Adrenal gland (tissue), 19 donors: ENCODE measurements at regions of chr20 and their contacts with region 1.

Region 1: DNA sequence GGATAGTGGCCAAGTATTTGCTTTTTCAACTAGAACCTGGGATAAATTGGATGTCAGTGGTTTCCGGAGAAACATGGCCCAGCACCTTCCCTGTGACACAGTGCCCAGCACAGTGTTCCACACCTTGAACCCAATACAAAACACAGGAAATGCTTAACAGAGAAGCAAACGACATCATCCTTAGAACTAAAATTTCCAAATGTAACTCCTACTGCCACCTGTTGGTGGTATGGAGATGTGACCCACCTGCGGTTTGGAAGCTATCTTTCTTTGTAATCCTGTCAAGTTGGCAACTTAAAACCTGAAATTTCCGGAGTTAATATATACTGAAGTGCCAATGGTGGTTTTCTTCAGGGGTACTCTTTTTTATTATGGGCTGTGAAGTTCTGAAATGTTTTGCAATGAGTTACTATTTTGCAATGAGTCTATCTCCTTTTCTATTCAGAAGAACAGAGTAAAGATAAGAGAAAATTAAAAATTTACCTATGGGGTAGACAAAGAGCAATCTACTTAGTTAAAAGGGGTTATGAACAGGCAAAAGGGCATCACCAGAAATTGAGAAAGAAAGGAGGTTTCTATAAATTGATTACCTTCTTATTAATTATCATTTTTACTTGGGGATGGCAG is 658.8 kb downstream of the PTPRT start:
- DNase-seq: peak in 4 of 7 donors; percentile 22 to 56 (median 25)
- H3K4me3 ChIP-seq: no peak overlapping the region
- H3K27ac ChIP-seq: no peak overlapping the region
- H3K4me1 ChIP-seq: peaks cover 0 to 7% of the 10 kb centered on the region in 2 donors
- H3K27me3 ChIP-seq: no peaks in the 10 kb centered on the region
- CTCF ChIP-seq: peak; percentile 55 to 81 (median 68)
- POLR2A ChIP-seq: no peak

Region 2: GRCh38 chr20:41738604-41739206 is 792.2 kb before region 1 on chr20:
- intact Hi-C with region 1: loop called in 1 of 2 experiments (anchors 10 kb)
- DNase-seq: peak; percentile 43 to 80 (median 54)
- H3K4me3 ChIP-seq: no peak overlapping the region
- H3K27ac ChIP-seq: no peak overlapping the region
- H3K4me1 ChIP-seq: no peaks in the 10 kb centered on the region
- H3K27me3 ChIP-seq: no peaks in the 10 kb centered on the region
- CTCF ChIP-seq: peak; percentile 59 to 86 (median 74)
- POLR2A ChIP-seq: no peak

Region 3: GRCh38 chr20:41955999-41956705 is 574.8 kb before region 1 on chr20:
- intact Hi-C with region 1: loop called in 1 of 2 experiments (anchors 5 kb)
- DNase-seq: peak in 4 of 7 donors; percentile 20 to 60 (median 34)
- H3K4me3 ChIP-seq: no peak overlapping the region
- H3K27ac ChIP-seq: no peak overlapping the region
- H3K4me1 ChIP-seq: no peaks in the 10 kb centered on the region
- H3K27me3 ChIP-seq: no peaks in the 10 kb centered on the region
- CTCF ChIP-seq: peak; percentile 28 to 65 (median 55)
- POLR2A ChIP-seq: no peak

Region 4: DNA sequence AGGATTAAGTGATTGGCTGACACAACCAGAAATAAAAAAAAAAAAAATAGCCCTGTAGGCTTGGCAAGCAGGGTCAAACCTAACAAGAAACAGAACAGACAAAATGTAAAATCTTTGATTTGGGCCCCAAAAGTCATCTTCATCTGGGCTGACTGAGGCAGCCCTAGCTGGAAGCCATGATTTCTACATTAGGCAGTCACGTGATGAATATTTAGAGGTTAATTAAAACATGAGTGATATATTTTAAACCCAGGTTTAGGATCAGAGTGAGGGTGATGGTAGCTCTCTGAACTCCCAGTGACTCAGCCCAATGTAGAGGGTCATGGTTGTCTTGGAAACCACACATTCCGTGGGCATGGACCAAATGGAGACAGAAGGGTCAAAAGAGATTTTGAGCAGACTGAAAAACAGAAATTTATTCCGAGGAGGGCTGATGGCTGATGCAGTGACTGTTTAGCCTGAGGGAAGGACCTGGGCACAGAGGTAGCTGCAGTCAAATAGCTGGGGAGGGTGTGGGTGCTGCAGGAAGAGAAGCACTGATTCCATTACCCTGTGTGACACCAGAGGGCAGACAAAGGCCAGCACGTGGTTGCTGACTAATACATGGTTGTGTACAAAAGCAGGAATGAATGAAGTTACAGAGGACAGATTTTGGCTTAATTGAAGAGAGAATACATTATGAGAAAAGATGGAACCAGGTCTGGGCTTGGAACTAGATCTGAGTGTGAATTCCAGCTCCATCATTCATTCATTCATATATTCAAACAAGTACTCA is 339.6 kb before region 1 on chr20:
- intact Hi-C with region 1: loop called in 1 of 2 experiments (anchors 5 kb)
- DNase-seq: no peak
- H3K4me3 ChIP-seq: no peak overlapping the region
- H3K27ac ChIP-seq: no peak overlapping the region
- H3K4me1 ChIP-seq: peaks cover 0 to 4% of the 10 kb centered on the region in 2 donors
- H3K27me3 ChIP-seq: no peaks in the 10 kb centered on the region
- CTCF ChIP-seq: no peak
- POLR2A ChIP-seq: no peak

Region 5: GRCh38 chr20:43187476-43188233 is 656.7 kb after region 1 on chr20:
- intact Hi-C with region 1: loop called in 1 of 2 experiments (anchors 10 kb)
- DNase-seq: peak; percentile 48 to 91 (median 75)
- H3K4me3 ChIP-seq: no peak overlapping the region
- H3K27ac ChIP-seq: no peak overlapping the region
- H3K4me1 ChIP-seq: no peaks in the 10 kb centered on the region
- H3K27me3 ChIP-seq: peaks cover 39% of the 10 kb centered on the region
- CTCF ChIP-seq: peak; percentile 82 to 96 (median 87)
- POLR2A ChIP-seq: no peak